ENCODE measurements at regions of chr9 and their contacts with region 1.

Region 1: DNA sequence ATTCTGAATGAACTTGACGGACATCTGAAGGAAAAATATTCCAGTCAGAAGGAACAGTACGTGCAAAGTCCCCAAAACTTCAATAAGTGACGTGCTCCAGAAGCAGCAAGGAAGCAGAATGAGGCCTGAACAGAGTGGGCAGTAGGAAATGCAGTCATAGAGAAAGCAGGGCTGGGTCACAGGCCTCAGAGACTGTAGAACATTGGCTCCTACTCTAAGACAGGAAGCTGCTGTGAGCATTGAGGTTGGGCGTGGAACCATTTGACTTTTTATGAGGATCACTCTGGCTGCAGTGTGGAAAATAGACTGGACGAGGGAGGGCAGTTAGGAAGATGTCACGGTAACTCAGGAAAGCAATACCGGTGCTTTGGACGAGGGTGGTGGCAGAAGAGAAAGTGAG is 64.0 kb downstream of the DOCK8 start:
- DNase-seq: peak; percentile 57
- H3K4me3 Mint-ChIP-seq: no peak overlapping the region
- H3K27ac Mint-ChIP-seq: no peak overlapping the region
- H3K4me1 Mint-ChIP-seq: peaks cover 43% of the 10 kb centered on the region
- H3K27me3 Mint-ChIP-seq: no peaks in the 10 kb centered on the region

Region 2: DNA sequence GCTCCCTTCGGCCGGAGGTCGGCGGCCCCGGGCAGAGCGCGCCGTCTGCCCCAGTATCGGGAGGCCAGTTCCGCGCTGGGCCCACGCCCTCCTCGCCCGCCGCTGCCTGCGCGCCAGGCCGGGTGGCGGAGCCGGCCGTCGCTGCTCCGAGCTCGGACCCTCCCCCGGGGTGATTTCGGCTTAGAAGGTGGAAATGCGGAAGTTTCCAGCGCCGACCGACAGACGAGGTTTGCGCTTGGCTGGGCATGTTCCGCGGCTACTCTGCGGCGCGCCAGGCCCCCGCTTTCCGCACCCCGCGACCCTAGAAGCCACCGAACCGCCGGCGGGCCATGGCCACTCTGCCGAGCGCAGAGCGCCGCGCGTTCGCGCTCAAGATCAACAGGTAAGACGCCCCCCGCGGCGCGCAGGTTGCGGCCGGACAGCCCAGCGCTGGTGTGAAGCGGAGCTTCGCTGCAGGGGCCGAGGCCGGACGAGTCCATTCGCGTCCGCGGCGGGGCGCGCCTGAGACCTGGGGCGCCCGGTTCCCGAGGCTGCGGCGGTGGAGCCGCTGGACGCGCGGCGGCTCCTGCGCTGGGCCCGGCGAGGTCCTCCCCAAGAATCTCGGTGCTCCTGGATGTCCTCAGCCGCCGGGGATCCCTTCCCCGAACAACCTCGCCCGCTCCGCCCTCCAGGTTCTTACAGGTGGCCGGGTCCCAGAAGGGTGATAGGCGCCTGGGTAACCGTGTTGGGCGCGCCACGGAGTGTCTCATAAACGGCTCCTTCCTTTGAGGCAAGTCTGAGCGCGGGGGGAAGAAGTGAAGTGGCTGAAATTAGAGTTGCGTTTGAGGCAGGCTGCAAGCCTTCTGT is 63.8 kb before region 1 on chr9 and contains the start of gene DOCK8:
- intact Hi-C with region 1: loop called (anchors 1 kb)
- DNase-seq: peak; percentile 59
- H3K4me3 Mint-ChIP-seq: peak within 1 kb of the TSS; percentile 85
- H3K27ac Mint-ChIP-seq: peak within 1 kb of the TSS; percentile 79
- H3K4me1 Mint-ChIP-seq: peaks cover 29% of the 10 kb centered on the region
- H3K27me3 Mint-ChIP-seq: peaks cover 12% of the 10 kb centered on the region
- total RNA-seq, gene DOCK8: 113 and 123 TPM in 2 replicates

Region 3: GRCh38 chr9:227860-228259 is 50.8 kb before region 1 on chr9:
- intact Hi-C with region 1: no loop called
- DNase-seq: no peak
- H3K4me3 Mint-ChIP-seq: no peak overlapping the region
- H3K27ac Mint-ChIP-seq: no peak overlapping the region
- H3K4me1 Mint-ChIP-seq: peaks cover 13% of the 10 kb centered on the region
- H3K27me3 Mint-ChIP-seq: no peaks in the 10 kb centered on the region

Region 4: DNA sequence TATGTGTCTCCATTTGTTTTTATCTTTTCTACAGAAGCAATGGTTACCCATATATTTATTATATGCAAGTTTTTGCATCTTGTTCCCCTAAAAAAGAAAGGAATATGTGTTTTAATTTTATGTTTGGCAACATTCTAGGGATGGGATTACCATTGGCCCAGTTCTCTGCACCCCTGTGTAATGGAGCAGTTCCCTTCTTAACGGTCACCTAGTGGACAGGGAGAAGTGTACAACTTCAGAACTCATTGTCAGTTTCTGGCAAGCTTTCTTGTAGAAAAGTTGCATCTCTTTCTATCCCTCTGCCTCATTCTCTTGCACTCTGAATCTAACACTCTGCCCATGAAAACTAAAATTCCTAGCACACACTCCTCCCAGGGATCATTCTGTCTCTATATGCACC is 14.3 kb after region 1 on chr9:
- intact Hi-C with region 1: loop called (anchors 2 kb)
- DNase-seq: no peak
- H3K4me3 Mint-ChIP-seq: no peak overlapping the region
- H3K27ac Mint-ChIP-seq: no peak overlapping the region
- H3K4me1 Mint-ChIP-seq: peaks cover 37% of the 10 kb centered on the region
- H3K27me3 Mint-ChIP-seq: no peaks in the 10 kb centered on the region

Region 5: GRCh38 chr9:326667-327066 is 48.0 kb after region 1 on chr9:
- intact Hi-C with region 1: no loop called
- DNase-seq: no peak
- H3K4me3 Mint-ChIP-seq: no peak overlapping the region
- H3K27ac Mint-ChIP-seq: peak overlapping the region; percentile 26
- H3K4me1 Mint-ChIP-seq: peaks cover 5% of the 10 kb centered on the region
- H3K27me3 Mint-ChIP-seq: no peaks in the 10 kb centered on the region

Region 6: DNA sequence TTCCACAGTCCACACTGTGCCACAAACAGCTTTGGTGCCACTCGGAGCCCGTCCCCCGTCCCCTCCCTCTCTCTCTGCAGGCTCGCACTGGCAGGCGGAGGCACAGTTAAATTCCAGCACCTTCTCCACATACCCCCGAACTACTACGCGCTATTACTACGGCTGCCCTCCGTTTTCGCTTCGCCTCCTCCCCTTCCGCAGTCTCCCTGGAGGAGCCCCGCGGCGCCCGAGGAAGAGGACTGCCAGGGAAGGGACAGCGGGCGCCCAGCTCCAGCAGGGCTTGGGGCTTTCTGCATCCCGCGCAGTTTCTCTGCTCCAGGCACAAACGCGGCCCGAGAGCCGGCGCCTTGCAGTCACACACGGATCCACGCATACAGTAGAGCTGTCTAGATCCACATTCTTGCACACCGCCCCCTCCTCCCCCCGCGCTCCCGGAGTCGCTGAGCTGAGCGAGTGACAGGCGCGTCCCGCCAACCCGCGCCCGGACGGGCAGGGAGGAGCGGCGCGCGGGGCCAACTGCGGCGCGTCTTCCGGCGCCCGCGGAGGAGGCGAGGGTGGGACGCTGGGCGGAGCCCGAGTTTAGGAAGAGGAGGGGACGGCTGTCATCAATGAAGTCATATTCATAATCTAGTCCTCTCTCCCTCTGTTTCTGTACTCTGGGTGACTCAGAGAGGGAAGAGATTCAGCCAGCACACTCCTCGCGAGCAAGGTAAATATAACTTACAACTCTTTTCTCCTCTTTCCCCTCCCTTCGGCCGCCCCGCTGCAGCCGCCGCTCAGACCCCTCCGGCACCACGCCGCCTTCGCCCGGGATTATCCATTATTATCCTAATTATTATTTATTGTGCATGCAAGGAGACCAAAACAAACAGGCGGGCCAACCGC is 1736.3 kb after region 1 on chr9 and contains the start of gene SMARCA2:
- intact Hi-C with region 1: loop called (anchors 5 kb)
- DNase-seq: peak; percentile 97
- H3K4me3 Mint-ChIP-seq: peak within 1 kb of the TSS; percentile 98
- H3K27ac Mint-ChIP-seq: peak within 1 kb of the TSS; percentile 99
- H3K4me1 Mint-ChIP-seq: peaks cover 39% of the 10 kb centered on the region
- H3K27me3 Mint-ChIP-seq: peaks cover 9% of the 10 kb centered on the region
- total RNA-seq, gene SMARCA2: 84.5 and 90.4 TPM in 2 replicates